ENCODE measurements at regions of chr1 and their contacts with region 1.

Region 1: GRCh38 chr1:29181413-29182225 is at the start of gene SRSF4:
- DNase-seq: peak; percentile 100
- ATAC-seq: peak; percentile 90
- H3K4me3 Mint-ChIP-seq: peak within 1 kb of the TSS; percentile 95
- H3K27ac Mint-ChIP-seq: peak within 1 kb of the TSS; percentile 96
- H3K4me1 Mint-ChIP-seq: peaks cover 46% of the 10 kb centered on the region
- H3K27me3 Mint-ChIP-seq: no peaks in the 10 kb centered on the region
- total RNA-seq, gene SRSF4: 119 to 129 TPM

Region 2: DNA sequence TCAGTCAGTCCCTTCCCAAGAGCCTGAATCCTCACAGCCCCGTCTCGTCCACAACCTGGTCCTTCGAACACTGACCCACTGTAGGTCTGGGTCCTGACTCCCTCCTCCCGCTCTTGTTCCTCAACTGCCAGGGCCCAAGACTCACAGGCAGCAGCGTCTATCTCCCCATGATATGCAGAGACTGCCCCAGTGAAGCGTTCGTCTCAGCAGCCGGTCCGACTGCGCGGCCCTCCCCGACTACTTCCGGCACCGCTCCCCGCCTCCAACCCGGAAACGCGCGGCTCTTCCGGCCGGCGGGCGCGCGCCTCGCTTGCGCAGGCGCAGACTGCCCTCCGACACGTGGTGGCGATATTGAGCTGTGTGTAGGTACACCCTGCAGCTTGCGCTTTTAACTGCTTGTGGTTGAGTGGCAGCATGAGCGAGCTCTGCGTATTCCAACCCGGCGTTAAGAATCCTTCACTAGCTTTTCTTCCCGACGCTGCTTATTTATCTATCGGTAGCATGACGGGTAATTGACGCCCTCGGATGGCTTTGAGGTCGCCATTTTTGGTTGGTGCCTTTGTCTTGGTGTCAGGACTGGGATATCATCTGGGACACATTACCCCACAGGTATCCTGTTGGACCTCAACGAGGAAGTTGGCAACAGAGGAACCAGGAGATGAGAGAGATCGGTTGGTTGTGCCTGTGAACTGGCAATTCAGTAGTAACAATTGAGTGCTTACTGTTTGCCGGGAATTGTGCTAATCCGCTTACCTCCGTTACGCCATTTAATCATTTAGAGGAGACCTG is 538.6 kb before region 1 on chr1 and contains the start of gene TAF12:
- POLR2A ChIA-PET with region 1: interaction called, 23 read pairs
- DNase-seq: peak; percentile 90
- ATAC-seq: peak; percentile 86
- H3K4me3 Mint-ChIP-seq: peak within 1 kb of the TSS; percentile 98
- H3K27ac Mint-ChIP-seq: peak within 1 kb of the TSS; percentile 99
- H3K4me1 Mint-ChIP-seq: peaks cover 37% of the 10 kb centered on the region
- H3K27me3 Mint-ChIP-seq: no peaks in the 10 kb centered on the region
- total RNA-seq, gene TAF12: 29.9 to 30.5 TPM

Region 3: DNA sequence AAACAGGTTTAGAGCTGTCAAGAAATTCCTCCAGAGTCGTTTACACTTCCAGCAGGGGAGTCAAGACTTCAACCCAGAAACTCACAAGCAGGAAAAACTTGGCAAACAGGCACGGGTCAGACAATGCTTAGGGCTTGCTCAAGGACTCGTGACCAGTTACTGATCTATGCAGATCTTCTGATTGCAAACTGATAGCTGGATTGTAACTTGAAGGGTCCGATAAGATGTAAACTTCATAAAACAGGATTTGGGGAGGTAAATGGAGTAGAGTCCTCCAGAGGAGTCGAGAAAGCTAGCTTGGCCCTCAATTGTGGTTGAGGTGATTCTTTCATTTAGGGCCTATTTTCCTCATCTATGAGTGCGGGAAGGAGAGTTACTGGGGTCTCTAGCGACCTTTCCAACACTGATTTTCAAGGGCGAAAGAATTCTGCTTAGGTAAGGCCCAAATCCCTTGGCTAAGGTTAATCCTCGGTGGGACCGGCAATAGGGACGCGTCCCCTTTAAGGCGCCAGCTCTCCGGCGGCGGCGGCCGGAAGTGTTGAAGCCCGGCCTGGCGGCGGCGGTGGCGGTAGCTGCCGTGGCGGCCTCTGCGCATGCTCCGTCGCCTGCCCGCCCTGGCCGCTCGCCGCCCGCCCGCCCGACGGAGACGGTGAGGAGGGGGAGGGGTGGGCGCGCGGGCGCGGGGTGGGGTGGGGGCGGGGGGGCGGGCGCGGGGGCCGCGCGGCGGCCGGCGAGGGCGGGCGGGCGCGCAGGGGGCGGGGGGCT is 513.2 kb before region 1 on chr1 and contains the start of gene GMEB1:
- POLR2A ChIA-PET with region 1: interaction called, 10 read pairs
- DNase-seq: peak; percentile 92
- ATAC-seq: peak; percentile 76
- H3K4me3 Mint-ChIP-seq: peak within 1 kb of the TSS; percentile 91
- H3K27ac Mint-ChIP-seq: peak within 1 kb of the TSS; percentile 97
- H3K4me1 Mint-ChIP-seq: peaks cover 13% of the 10 kb centered on the region
- H3K27me3 Mint-ChIP-seq: no peaks in the 10 kb centered on the region
- total RNA-seq, gene GMEB1: 31.7 to 32.7 TPM

Region 4: GRCh38 chr1:28886731-28887418 is 294.7 kb before region 1 on chr1:
- POLR2A ChIA-PET with region 1: interaction called, 18 read pairs
- DNase-seq: peak; percentile 97
- ATAC-seq: peak; percentile 72
- H3K4me3 Mint-ChIP-seq: peak overlapping the region; percentile 87
- H3K27ac Mint-ChIP-seq: peak overlapping the region; percentile 94
- H3K4me1 Mint-ChIP-seq: peaks cover 39% of the 10 kb centered on the region
- H3K27me3 Mint-ChIP-seq: no peaks in the 10 kb centered on the region

Region 5: GRCh38 chr1:29113413-29114117 is 68.1 kb before region 1 on chr1:
- POLR2A ChIA-PET with region 1: no interaction called
- DNase-seq: no peak
- ATAC-seq: no peak
- H3K4me3 Mint-ChIP-seq: no peak overlapping the region
- H3K27ac Mint-ChIP-seq: no peak overlapping the region
- H3K4me1 Mint-ChIP-seq: peaks cover 2% of the 10 kb centered on the region
- H3K27me3 Mint-ChIP-seq: no peaks in the 10 kb centered on the region

Region 6: DNA sequence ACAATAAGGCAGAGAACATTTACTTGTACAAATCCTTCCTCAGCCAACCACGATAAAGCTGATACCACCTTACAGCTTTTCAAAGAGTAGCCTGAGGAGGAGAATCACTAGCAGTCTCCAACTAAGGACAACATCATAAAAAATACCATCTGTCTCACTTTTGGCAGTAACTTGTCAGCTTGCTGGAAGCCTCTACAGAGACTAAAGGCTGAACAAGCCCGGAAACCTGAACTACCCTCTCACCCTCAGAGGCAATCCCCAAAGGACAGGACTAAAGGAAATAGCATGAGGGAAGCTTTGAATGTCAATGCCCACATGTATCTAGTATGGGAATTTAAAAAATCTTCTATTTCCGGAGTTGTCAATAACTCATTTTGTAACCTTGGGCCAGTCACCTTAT is 10.5 kb before region 1 on chr1:
- POLR2A ChIA-PET with region 1: interaction called, 45 read pairs
- DNase-seq: no peak
- ATAC-seq: peak; percentile 48
- H3K4me3 Mint-ChIP-seq: peak overlapping the region; percentile 76
- H3K27ac Mint-ChIP-seq: peak overlapping the region; percentile 30
- H3K4me1 Mint-ChIP-seq: peaks cover 57% of the 10 kb centered on the region
- H3K27me3 Mint-ChIP-seq: no peaks in the 10 kb centered on the region

Region 7: DNA sequence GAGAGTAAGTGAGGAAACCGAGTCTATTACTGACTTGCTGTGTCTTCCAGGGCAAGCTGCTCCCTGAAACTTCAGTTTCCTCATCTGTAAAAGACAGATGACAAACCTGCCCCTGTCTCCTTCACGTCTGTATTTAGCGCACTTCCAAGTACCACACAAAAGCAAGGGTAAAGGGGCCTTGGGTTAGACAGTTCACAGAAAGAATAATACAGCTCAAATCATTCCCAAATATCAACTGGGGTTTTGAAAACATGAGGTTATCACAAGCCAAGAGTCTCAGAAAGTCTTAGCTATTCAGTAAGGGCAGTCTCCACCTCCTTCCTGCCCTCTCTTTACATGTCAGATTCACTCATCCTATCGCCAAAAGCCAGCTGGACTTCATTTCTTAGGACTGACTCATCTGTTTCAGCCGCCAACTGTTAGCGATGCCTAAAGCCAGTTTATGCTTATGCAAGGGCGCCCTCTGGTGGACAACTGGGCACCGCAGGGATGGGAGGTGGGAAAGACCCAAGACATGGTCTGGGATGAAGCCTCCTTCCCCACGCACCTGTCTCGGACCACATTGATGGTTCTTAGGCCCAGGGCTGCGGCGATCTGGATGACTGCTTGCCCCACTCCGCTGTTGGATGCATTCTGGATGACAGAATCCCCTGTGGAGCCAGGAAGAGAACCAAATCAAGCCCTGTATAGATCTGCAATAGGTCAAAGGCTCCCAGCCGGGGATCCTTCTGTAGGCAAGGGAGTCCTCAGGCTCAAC is 21.1 kb after region 1 on chr1:
- POLR2A ChIA-PET with region 1: interaction called, 18 read pairs
- DNase-seq: peak; percentile 86
- ATAC-seq: peak; percentile 90
- H3K4me3 Mint-ChIP-seq: no peak overlapping the region
- H3K27ac Mint-ChIP-seq: no peak overlapping the region
- H3K4me1 Mint-ChIP-seq: peaks cover 9% of the 10 kb centered on the region
- H3K27me3 Mint-ChIP-seq: no peaks in the 10 kb centered on the region

Region 8: GRCh38 chr1:29222686-29223085 is 41.1 kb after region 1 on chr1:
- POLR2A ChIA-PET with region 1: no interaction called
- DNase-seq: no peak
- ATAC-seq: no peak
- H3K4me3 Mint-ChIP-seq: no peak overlapping the region
- H3K27ac Mint-ChIP-seq: no peak overlapping the region
- H3K4me1 Mint-ChIP-seq: peaks cover 7% of the 10 kb centered on the region
- H3K27me3 Mint-ChIP-seq: no peaks in the 10 kb centered on the region

Region 9: GRCh38 chr1:29245876-29246275 is 64.3 kb after region 1 on chr1:
- POLR2A ChIA-PET with region 1: no interaction called
- DNase-seq: no peak
- ATAC-seq: peak; percentile 45
- H3K4me3 Mint-ChIP-seq: no peak overlapping the region
- H3K27ac Mint-ChIP-seq: no peak overlapping the region
- H3K4me1 Mint-ChIP-seq: no peaks in the 10 kb centered on the region
- H3K27me3 Mint-ChIP-seq: peaks cover 9% of the 10 kb centered on the region

Measured in activated naive CD8-positive, alpha-beta T cell treated with anti-CD3 and anti-CD28 coated beads, Interleukin-2, amount 10 ng/mL, durations not matched to agents 7 days and 5 days (primary cell).